ENCODE measurements at regions of chr1 and their contacts with region 1.

Region 1: DNA sequence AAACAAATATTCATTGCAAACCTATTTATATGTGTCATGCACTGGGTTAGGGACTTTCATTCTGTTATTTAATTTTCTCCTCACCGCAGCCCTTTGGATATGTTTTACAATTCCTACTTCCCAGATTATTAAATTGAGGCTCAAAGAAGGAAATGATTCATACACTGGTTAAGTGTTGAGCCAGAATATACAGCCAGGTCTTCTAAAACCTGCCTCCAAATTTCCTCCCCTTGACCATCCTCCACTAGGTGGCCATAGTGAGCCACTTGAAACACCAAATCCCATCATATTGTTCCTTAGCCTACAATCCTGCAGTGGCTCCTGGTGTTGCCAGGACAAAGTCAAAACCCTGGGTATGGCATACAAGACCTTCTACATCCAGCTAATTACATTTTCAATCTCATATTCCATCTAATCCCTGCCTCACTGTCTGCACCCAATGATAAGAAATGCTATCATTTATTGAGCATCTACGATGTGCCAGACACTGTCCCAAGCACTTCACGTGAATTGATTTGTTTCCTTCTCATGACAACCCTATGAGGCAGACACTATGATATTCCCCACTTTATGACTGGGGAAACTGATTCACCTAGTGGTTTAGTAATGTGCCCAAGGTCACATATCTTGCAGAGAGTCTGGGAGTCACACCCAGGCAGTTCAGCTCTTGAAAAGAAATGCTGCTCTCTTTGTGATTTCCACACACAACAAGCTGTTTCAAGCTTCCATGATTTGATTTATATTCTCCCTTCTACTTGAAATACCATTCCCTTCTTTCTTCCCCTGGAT is 23.6 kb upstream of the KIRREL1 start:
- DNase-seq: peak; percentile 95
- H3K4me3 Mint-ChIP-seq: peak overlapping the region; percentile 55
- H3K27ac Mint-ChIP-seq: peak overlapping the region; percentile 49
- H3K4me1 Mint-ChIP-seq: peaks cover 28% of the 10 kb centered on the region
- H3K27me3 Mint-ChIP-seq: no peaks in the 10 kb centered on the region
- CTCF ChIP-seq: peak; percentile 94

Region 2: GRCh38 chr1:158019171-158019868 is 49.4 kb after region 1 on chr1:
- CTCF ChIA-PET with region 1: interaction called, 17 read pairs
- POLR2A ChIA-PET with region 1: interaction called, 4 read pairs
- intact Hi-C with region 1: loop called (anchors 1 kb)
- DNase-seq: peak; percentile 92
- H3K4me3 Mint-ChIP-seq: peak overlapping the region; percentile 20
- H3K27ac Mint-ChIP-seq: peak overlapping the region; percentile 86
- H3K4me1 Mint-ChIP-seq: peaks cover 74% of the 10 kb centered on the region
- H3K27me3 Mint-ChIP-seq: no peaks in the 10 kb centered on the region
- CTCF ChIP-seq: no peak

Region 3: GRCh38 chr1:158035976-158036583 is 66.2 kb after region 1 on chr1:
- CTCF ChIA-PET with region 1: interaction called, 56 read pairs
- POLR2A ChIA-PET with region 1: interaction called, 13 read pairs
- intact Hi-C with region 1: loop called (anchors 1 kb)
- DNase-seq: peak; percentile 68
- H3K4me3 Mint-ChIP-seq: no peak overlapping the region
- H3K27ac Mint-ChIP-seq: peak overlapping the region; percentile 77
- H3K4me1 Mint-ChIP-seq: peaks cover 45% of the 10 kb centered on the region
- H3K27me3 Mint-ChIP-seq: no peaks in the 10 kb centered on the region
- CTCF ChIP-seq: peak; percentile 92

Region 4: GRCh38 chr1:158087320-158087927 is 117.5 kb after region 1 on chr1:
- CTCF ChIA-PET with region 1: interaction called, 78 read pairs
- POLR2A ChIA-PET with region 1: interaction called, 3 read pairs
- intact Hi-C with region 1: loop called (anchors 1 kb)
- DNase-seq: peak; percentile 85
- H3K4me3 Mint-ChIP-seq: no peak overlapping the region
- H3K27ac Mint-ChIP-seq: no peak overlapping the region
- H3K4me1 Mint-ChIP-seq: no peaks in the 10 kb centered on the region
- H3K27me3 Mint-ChIP-seq: no peaks in the 10 kb centered on the region
- CTCF ChIP-seq: peak; percentile 98

Region 5: GRCh38 chr1:158117854-158118704 is 148.2 kb after region 1 on chr1:
- CTCF ChIA-PET with region 1: interaction called, 2,587 read pairs
- POLR2A ChIA-PET with region 1: interaction called, 13 read pairs
- intact Hi-C with region 1: loop called (anchors 1 kb)
- DNase-seq: peak; percentile 65
- H3K4me3 Mint-ChIP-seq: no peak overlapping the region
- H3K27ac Mint-ChIP-seq: no peak overlapping the region
- H3K4me1 Mint-ChIP-seq: peaks cover 11% of the 10 kb centered on the region
- H3K27me3 Mint-ChIP-seq: peaks cover 11% of the 10 kb centered on the region
- CTCF ChIP-seq: peak; percentile 55

Region 6: GRCh38 chr1:158998781-158999161 is 1028.9 kb after region 1 on chr1:
- CTCF ChIA-PET with region 1: interaction called, 3 read pairs
- POLR2A ChIA-PET with region 1: interaction called, 4 read pairs
- intact Hi-C with region 1: loop called (anchors 1 kb)
- DNase-seq: peak; percentile 81
- H3K4me3 Mint-ChIP-seq: peak overlapping the region; percentile 65
- H3K27ac Mint-ChIP-seq: peak overlapping the region; percentile 63
- H3K4me1 Mint-ChIP-seq: peaks cover 22% of the 10 kb centered on the region
- H3K27me3 Mint-ChIP-seq: no peaks in the 10 kb centered on the region
- CTCF ChIP-seq: peak; percentile 95

Measured in MCF 10A (cell line).